H1 (cell line): ENCODE measurements at regions of chr22 and their contacts with region 1.

Region 1: DNA sequence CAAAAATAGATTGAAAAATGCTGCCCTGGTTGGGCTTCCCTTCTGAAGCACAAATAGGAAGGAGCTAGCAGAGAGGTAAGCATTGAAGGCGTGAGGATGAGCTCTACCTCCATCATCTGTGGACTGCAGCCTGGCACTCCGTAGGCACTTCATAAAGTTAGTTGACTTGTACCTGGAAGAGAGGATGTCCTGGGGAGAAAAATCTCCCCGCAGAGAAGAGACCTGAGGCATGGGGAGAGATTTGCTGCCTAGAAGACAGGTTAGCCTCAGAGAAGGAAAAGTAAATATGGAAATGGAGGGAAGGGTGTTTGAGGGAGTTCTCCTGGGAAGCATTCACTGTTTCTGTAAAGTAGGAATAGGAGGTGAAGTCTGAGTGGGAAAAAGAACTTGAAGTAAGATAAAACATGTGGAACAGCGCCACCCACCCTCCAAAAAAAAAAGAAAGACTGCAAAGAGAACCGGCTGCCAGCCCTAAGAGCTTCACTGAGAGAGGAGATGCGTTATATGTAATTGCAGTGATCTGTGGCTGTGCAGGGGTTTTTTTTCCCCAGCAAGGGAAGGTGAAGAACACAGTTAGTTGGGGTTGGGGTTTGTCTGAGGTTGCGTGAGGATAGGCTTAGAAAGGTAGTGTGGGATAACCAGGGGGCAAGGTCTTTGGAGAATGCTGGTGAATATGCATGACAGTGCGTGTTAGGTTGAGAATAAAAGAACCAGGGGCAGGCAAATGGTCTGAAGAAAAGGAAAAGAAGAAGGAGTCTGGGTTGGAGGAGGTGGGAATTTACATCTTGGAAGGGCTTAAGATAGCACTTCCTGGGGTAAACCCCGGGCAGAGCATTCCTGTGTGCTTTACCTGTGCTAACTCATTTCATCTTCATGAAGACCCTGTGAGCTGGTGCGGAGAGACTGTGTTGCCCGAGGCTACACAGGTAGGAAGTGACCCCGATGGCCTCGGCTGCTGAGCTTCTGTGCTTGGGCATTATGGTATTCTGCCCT is 16.0 kb downstream of the TNRC6B start:
- DNase-seq: peak; percentile 63 to 68
- H3K4me3 ChIP-seq: peak overlapping the region in 3 of 4 experiments; percentile 21 to 48 (median 34); a peak in 5 of 8 replicates
- H3K27ac ChIP-seq: peak overlapping the region; percentile 62; the same call in 1 of the 2 replicates
- H3K4me1 ChIP-seq: peaks cover 24 to 56% (median 36%) of the 10 kb centered on the region in 4 experiments
- H3K27me3 ChIP-seq: no peaks in the 10 kb centered on the region
- CTCF ChIP-seq: peak in 2 of 3 experiments; percentile 12 to 38; a peak in 2 of 4 replicates
- EP300 ChIP-seq: 0 out of 3 replicates have a peak, but pooled peaks of 1 of the 2 experiments have one; percentile 59
- POLR2A ChIP-seq: peak; percentile 39 to 73
- RAD21 ChIP-seq: peak; percentile 2 to 28; a peak in 2 of 4 replicates

Region 2: DNA sequence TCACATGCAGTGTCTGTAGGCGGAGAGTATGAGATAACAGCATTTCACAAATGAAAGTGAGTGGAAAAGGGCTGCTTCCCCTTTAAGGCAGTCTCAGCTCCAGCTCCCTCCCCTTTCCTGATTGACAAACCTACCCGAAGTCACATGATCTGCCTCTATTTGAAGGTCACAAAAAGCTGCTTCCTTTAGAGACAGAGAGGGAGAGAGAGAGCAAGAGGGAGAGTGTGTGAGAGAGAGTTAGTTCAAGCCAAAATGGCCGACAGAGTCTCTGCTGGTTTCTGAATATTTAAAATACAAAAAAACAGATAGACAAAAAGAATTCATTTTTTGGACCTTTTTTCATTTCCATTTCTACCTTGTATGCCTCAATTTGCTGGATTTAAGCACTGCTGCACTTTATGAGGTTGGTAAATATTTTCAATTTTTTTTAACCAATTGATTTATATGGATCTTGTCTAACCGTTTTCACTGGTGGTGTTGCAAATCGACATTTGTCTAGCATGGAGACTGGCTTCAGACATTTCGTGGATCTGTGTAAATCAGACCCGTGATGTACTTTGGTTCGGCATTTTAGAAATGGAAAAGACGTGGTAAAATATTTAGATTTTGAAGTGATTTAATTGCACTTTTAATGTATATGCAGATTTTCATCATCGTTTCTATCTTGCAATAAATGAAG is 15.8 kb before region 1 on chr22 and contains the start of gene TNRC6B:
- CTCF ChIA-PET with region 1: interaction called, 28 read pairs
- POLR2A ChIA-PET with region 1: interaction called, 224 read pairs
- DNase-seq: peak; percentile 65 to 75
- H3K4me3 ChIP-seq: peak within 1 kb of the TSS; percentile 71 to 95 (median 86)
- H3K27ac ChIP-seq: peak within 1 kb of the TSS; percentile 88
- H3K4me1 ChIP-seq: peaks cover 2 to 16% (median 9%) of the 10 kb centered on the region in 4 experiments; a peak in 6 of 7 replicates
- H3K27me3 ChIP-seq: no peaks in the 10 kb centered on the region
- CTCF ChIP-seq: no peak
- EP300 ChIP-seq: 0 out of 3 replicates have a peak, but pooled peaks of 1 of the 2 experiments have one; percentile 80
- POLR2A ChIP-seq: peak; percentile 97 to 99
- RAD21 ChIP-seq: no peak
- total RNA-seq, gene TNRC6B: 45.5 and 48.9 TPM in 2 replicates

Region 3: DNA sequence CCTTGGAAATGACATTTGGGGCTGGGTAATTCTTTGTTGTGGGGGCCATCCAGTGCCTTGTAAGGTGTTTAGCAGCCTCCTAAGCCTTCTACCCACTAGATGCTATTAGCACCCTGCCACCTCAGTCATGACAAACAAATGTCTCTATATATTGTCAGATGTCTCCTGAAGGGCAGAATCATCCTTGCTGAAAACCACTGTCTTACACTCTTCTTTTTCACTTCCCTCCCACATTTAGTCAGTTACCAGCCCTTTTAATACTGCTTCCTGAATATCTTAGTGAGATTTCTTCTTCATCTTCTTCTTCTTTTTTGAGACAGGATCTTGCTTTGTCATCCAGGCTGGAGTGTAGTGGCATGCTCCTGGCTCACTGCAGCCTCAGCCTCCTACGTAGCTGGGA is 17.1 kb after region 1 on chr22:
- CTCF ChIA-PET with region 1: interaction called, 5 read pairs
- POLR2A ChIA-PET with region 1: interaction called, 33 read pairs
- DNase-seq: no peak
- H3K4me3 ChIP-seq: peak overlapping the region in 1 of 4 experiments; percentile 10; a peak in 1 of 8 replicates
- H3K27ac ChIP-seq: no peak overlapping the region
- H3K4me1 ChIP-seq: peaks cover 14 to 35% (median 30%) of the 10 kb centered on the region in 4 experiments
- H3K27me3 ChIP-seq: no peaks in the 10 kb centered on the region
- CTCF ChIP-seq: no peak
- EP300 ChIP-seq: no peak
- POLR2A ChIP-seq: no peak
- RAD21 ChIP-seq: no peak

Region 4: GRCh38 chr22:40220316-40221054 is 26.8 kb after region 1 on chr22:
- CTCF ChIA-PET with region 1: interaction called, 4 read pairs
- POLR2A ChIA-PET with region 1: interaction called, 11 read pairs
- DNase-seq: no peak
- H3K4me3 ChIP-seq: no peak overlapping the region
- H3K27ac ChIP-seq: no peak overlapping the region
- H3K4me1 ChIP-seq: peaks cover 15 to 42% (median 23%) of the 10 kb centered on the region in 4 experiments
- H3K27me3 ChIP-seq: no peaks in the 10 kb centered on the region
- CTCF ChIP-seq: no peak
- EP300 ChIP-seq: no peak
- POLR2A ChIP-seq: no peak
- RAD21 ChIP-seq: no peak